Testis (tissue), 5 donors: ENCODE measurements at regions of chr1 and their contacts with region 1.

Region 1: GRCh38 chr1:179002552-179003345 is 22.9 kb upstream of the FAM20B start:
- DNase-seq: peak; percentile 90
- H3K4me3 ChIP-seq: peak overlapping the region in 1 of 2 donors; percentile 9
- H3K27ac ChIP-seq: peak overlapping the region in 1 of 2 donors; percentile 39
- H3K4me1 ChIP-seq: peaks cover 10% of the 10 kb centered on the region
- H3K27me3 ChIP-seq: no peaks in the 10 kb centered on the region
- CTCF ChIP-seq: peak; percentile 87 to 98 (median 90)
- POLR2A ChIP-seq: no peak

Region 2: DNA sequence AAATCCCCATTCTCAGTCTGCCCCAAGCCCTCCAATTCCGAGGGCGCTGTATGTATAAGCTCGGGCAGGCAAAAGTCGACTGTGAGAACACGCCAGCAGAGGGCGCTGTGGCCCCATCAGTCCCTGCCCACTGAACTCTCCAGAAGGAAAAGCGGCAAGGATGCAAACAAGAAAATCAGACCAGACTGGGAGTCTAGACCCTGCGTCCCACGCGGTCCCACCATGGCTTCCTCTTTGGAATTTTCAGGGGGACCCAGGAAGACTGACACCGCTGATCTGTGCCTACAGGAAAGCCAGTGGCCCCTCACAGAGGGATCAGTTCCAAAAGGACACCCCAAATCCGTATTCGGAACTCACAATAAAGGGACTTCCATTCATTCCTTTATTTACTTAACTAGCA is 470.4 kb before region 1 on chr1:
- intact Hi-C with region 1: loop called (anchors 10 kb)
- DNase-seq: peak; percentile 91
- H3K4me3 ChIP-seq: peak overlapping the region in 1 of 2 donors; percentile 4
- H3K27ac ChIP-seq: no peak overlapping the region
- H3K4me1 ChIP-seq: no peaks in the 10 kb centered on the region
- H3K27me3 ChIP-seq: no peaks in the 10 kb centered on the region
- CTCF ChIP-seq: peak; percentile 79 to 95 (median 88)
- POLR2A ChIP-seq: no peak

Region 3: DNA sequence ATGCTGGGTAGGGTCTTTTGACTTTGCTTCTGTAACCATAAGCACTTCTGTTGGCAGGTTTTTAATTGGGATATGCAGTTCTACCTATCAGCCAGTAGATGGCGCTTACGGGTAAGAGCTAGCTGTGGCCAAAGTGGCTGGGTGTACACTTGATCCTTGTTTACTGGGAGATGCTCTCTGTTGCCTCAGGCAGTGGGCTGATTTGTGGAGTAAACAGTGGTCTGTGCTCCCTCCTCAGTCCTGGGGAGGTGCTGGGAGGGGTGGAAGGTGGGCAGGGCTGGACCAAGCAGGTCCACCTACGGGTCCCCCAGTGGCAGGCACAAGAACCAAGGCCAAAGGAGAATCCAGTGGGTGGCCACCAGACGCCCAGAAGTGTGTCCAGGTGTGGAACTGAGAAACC is 234.3 kb before region 1 on chr1:
- intact Hi-C with region 1: loop called (anchors 10 kb)
- DNase-seq: no peak
- H3K4me3 ChIP-seq: no peak overlapping the region
- H3K27ac ChIP-seq: no peak overlapping the region
- H3K4me1 ChIP-seq: no peaks in the 10 kb centered on the region
- H3K27me3 ChIP-seq: no peaks in the 10 kb centered on the region
- CTCF ChIP-seq: peak in 2 of 3 experiments; percentile 57 to 78
- POLR2A ChIP-seq: no peak

Region 4: GRCh38 chr1:178885869-178886268 is 116.9 kb before region 1 on chr1:
- intact Hi-C with region 1: no loop called
- DNase-seq: no peak
- H3K4me3 ChIP-seq: no peak overlapping the region
- H3K27ac ChIP-seq: no peak overlapping the region
- H3K4me1 ChIP-seq: no peaks in the 10 kb centered on the region
- H3K27me3 ChIP-seq: no peaks in the 10 kb centered on the region
- CTCF ChIP-seq: no peak
- POLR2A ChIP-seq: no peak